ENCODE measurements at regions of chr2 and their contacts with region 1.

Region 1: GRCh38 chr2:69715964-69716363 is 26.0 kb upstream of the ANXA4 start:
- DNase-seq: no peak
- H3K4me3 Mint-ChIP-seq: no peak overlapping the region
- H3K27ac Mint-ChIP-seq: no peak overlapping the region
- H3K4me1 Mint-ChIP-seq: peaks cover 20% of the 10 kb centered on the region
- H3K27me3 Mint-ChIP-seq: peaks cover 2% of the 10 kb centered on the region

Region 2: DNA sequence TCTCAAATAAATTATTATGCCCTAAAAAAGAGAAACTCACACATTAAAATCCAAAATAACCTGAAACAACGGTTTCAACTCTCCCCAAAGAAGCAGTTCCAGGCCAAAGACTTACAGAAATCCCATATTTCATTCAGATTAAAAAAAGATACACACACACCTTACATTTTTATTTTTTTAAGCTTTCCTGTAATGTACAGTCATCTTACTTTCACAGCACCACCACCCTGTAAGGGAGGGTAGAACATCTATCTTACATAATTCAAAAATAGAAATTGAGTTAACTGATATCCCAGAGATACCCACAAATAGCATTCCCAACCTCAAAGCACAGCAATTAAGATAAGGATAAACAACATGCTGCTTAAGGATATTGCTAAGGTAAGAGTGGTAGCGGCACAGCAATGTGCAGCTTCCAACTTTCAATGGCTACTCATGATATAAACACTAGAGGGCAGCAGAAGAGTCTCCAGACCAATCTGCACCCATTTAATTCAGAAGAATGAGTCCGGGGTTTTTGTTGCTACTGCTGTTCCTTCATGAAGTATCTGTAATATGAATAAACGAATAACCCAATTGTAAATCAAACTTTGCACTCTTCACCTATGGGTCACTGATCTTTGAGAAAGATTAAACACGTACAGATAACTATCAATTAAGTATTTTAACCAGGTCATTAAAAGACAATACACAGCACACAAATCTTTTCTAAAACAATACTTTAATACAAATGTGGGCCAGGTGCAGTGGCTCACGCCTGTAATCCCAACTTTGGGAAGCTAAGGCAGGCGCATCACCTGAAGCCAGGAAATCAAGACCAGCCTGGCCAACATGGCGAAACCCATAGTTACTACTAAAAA is 340.2 kb before region 1 on chr2:
- intact Hi-C with region 1: loop called (anchors 1 kb)
- DNase-seq: no peak
- H3K4me3 Mint-ChIP-seq: no peak overlapping the region
- H3K27ac Mint-ChIP-seq: no peak overlapping the region
- H3K4me1 Mint-ChIP-seq: peaks cover 13% of the 10 kb centered on the region
- H3K27me3 Mint-ChIP-seq: no peaks in the 10 kb centered on the region

Region 3: GRCh38 chr2:69436938-69437750 is 278.8 kb before region 1 on chr2 and contains the start of gene NFU1:
- intact Hi-C with region 1: loop called (anchors 1 kb)
- DNase-seq: peak; percentile 79
- H3K4me3 Mint-ChIP-seq: peak within 1 kb of the TSS; percentile 93
- H3K27ac Mint-ChIP-seq: peak within 1 kb of the TSS; percentile 99
- H3K4me1 Mint-ChIP-seq: peaks cover 17% of the 10 kb centered on the region
- H3K27me3 Mint-ChIP-seq: no peaks in the 10 kb centered on the region
- total RNA-seq, gene NFU1: 29.3 and 29.8 TPM in 2 replicates

Region 4: GRCh38 chr2:69559442-69560146 is 156.4 kb before region 1 on chr2:
- intact Hi-C with region 1: loop called (anchors 1 kb)
- DNase-seq: no peak
- H3K4me3 Mint-ChIP-seq: no peak overlapping the region
- H3K27ac Mint-ChIP-seq: peak overlapping the region; percentile 59
- H3K4me1 Mint-ChIP-seq: peaks cover 52% of the 10 kb centered on the region
- H3K27me3 Mint-ChIP-seq: no peaks in the 10 kb centered on the region

Region 5: DNA sequence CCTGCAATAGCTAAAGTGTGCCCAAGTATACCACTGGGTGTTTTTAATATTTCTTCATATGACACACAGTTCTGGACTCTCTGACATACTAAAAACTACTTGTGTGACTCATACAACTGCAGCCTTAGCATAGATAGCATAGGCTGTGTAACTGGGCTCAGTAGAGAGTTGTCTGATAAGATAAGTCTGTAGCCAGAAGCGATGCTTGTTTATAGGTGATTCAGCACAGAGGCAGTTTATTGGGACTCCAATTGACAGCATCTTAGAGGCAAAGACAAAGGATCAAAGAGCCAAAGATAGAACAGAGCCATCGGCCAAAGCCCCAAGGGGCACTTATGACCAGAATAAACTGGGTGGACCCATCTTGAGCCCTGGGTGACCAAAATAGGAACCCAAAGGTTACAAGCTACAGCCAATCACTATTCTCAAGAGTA is 114.8 kb before region 1 on chr2:
- intact Hi-C with region 1: loop called (anchors 1 kb)
- DNase-seq: no peak
- H3K4me3 Mint-ChIP-seq: no peak overlapping the region
- H3K27ac Mint-ChIP-seq: peak overlapping the region; percentile 42
- H3K4me1 Mint-ChIP-seq: peaks cover 76% of the 10 kb centered on the region
- H3K27me3 Mint-ChIP-seq: no peaks in the 10 kb centered on the region

Region 6: DNA sequence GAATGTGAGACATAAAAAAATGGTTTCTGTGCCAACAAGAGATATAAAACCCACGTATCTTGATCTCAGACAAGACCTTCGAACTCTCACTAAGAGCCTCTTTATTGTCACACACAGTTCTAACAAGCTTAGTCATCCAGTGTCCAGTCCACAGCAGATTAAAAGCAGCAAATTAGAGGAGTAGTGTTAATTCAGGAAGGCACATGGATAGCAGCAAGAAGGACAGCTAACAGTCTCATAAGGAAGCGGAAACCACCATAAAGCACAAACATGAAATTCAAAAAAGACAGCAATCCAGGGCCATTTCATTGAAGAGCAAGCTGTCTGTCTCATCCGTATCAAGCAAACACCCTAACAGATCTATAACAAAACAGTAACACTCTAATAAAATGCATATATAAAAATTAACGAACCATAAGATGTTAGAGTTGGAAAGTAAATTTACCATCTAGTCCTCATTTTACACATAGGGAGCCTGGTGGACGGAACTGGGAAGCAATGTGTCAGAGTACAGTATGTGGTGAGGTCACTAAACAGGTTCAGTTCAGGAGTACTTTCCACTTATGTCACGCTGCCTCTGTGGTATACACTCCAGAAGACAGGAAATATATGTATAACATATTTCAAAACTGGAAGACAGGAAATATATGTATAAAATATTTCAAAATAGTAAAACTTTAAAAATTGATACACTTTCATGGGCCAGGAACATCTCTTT is 90.7 kb before region 1 on chr2:
- intact Hi-C with region 1: loop called (anchors 5 kb)
- DNase-seq: no peak
- H3K4me3 Mint-ChIP-seq: no peak overlapping the region
- H3K27ac Mint-ChIP-seq: no peak overlapping the region
- H3K4me1 Mint-ChIP-seq: peaks cover 20% of the 10 kb centered on the region
- H3K27me3 Mint-ChIP-seq: no peaks in the 10 kb centered on the region

Region 7: DNA sequence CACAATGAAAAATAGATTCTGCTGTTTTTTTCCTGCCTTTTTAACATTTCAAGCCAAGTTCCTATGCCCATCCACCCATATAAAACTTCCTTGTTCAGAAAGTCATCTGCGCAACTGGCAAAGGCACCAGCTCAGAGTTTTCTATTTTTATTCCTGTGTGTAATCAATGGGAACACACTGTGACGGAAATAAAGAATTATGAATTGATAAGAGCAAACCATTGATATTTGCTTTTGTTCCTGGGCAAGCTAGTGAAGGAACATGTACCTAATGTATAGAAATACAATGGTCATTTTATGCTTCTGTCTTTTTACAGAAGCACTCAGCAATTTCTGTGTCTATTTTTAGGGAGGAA is 41.7 kb before region 1 on chr2:
- intact Hi-C with region 1: loop called (anchors 2 kb)
- DNase-seq: no peak
- H3K4me3 Mint-ChIP-seq: no peak overlapping the region
- H3K27ac Mint-ChIP-seq: no peak overlapping the region
- H3K4me1 Mint-ChIP-seq: peaks cover 24% of the 10 kb centered on the region
- H3K27me3 Mint-ChIP-seq: no peaks in the 10 kb centered on the region

Measured in activated T-helper 1 cell treated with anti-CD3 and anti-CD28 coated beads, Interleukin-12 subunit alpha, Interleukin-12 subunit beta, Interleukin-2, Interleukin-4 antibody, amounts not matched to agents 30 ng/mL and 10 ng/mL and 1 ng/mL, durations not matched to agents 14 hours and 24 hours and 36 hours (primary cell).